ENCODE measurements at regions of chr1 and their contacts with region 1.

Region 1: GRCh38 chr1:61851849-61852669 is 109.8 kb downstream of the PATJ start:
- DNase-seq: peak; percentile 85
- H3K4me3 ChIP-seq: no peak overlapping the region
- H3K27ac ChIP-seq: no peak overlapping the region
- H3K4me1 ChIP-seq: peaks cover 23% of the 10 kb centered on the region
- H3K27me3 ChIP-seq: no peaks in the 10 kb centered on the region
- CTCF ChIP-seq: peak; percentile 90

Region 2: GRCh38 chr1:60848583-60849188 is 1003.4 kb before region 1 on chr1:
- CTCF ChIA-PET with region 1: interaction called, 7 read pairs
- POLR2A ChIA-PET with region 1: no interaction called
- intact Hi-C with region 1: loop called (anchors 2 kb)
- DNase-seq: peak; percentile 68
- H3K4me3 ChIP-seq: no peak overlapping the region
- H3K27ac ChIP-seq: no peak overlapping the region
- H3K4me1 ChIP-seq: no peaks in the 10 kb centered on the region
- H3K27me3 ChIP-seq: no peaks in the 10 kb centered on the region
- CTCF ChIP-seq: peak; percentile 69

Region 3: GRCh38 chr1:61049850-61050540 is 802.1 kb before region 1 on chr1:
- CTCF ChIA-PET with region 1: no interaction called
- POLR2A ChIA-PET with region 1: no interaction called
- intact Hi-C with region 1: loop called (anchors 10 kb)
- DNase-seq: peak; percentile 93
- H3K4me3 ChIP-seq: peak overlapping the region; percentile 82
- H3K27ac ChIP-seq: peak overlapping the region; percentile 86
- H3K4me1 ChIP-seq: peaks cover 8% of the 10 kb centered on the region
- H3K27me3 ChIP-seq: no peaks in the 10 kb centered on the region
- CTCF ChIP-seq: peak; percentile 97

Region 4: DNA sequence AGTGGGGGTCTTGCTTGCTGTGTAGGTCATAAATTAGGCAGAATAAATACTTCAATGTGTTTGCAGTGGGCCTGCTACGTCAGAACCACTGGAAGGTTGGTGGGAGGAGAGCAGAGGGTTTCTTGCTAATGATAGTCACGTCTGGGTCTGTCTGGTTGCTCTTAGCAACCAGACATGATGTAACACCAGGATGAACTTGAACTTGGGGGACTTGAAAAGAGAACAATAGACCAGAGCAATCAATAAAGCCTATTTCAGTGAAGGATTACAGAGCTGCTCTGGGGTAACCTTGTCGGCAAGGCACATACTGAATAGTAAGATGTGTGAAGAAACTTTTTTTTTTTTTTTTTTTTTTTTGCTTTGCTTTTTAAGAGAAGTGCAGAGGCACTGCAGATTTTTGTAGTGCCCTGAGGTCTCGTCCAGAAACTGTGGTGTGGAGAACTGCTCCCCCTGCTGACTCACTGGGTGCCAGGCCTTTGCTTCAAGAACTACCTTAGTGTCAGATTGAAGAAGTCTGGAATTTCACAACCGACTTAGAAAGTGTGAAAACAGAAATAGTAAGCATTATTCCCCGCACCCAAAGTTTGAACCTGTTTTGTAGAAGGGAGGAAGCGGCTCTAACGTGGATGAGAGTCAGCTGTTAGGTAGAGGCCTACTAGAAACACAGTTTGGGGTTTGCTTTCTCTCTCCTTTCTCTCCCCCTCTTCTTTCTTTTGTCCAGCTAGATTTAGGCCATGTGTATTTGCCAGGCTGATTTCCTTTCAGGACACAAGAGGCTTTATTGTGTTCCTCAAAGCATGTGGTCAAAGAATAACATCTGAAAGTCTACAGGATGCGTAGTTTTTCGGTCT is 398.7 kb before region 1 on chr1:
- CTCF ChIA-PET with region 1: no interaction called
- POLR2A ChIA-PET with region 1: no interaction called
- intact Hi-C with region 1: loop called (anchors 10 kb)
- DNase-seq: peak; percentile 92
- H3K4me3 ChIP-seq: no peak overlapping the region
- H3K27ac ChIP-seq: peak overlapping the region; percentile 62
- H3K4me1 ChIP-seq: peaks cover 37% of the 10 kb centered on the region
- H3K27me3 ChIP-seq: no peaks in the 10 kb centered on the region
- CTCF ChIP-seq: peak; percentile 90

Region 5: GRCh38 chr1:61641578-61642336 is 210.3 kb before region 1 on chr1:
- CTCF ChIA-PET with region 1: no interaction called
- POLR2A ChIA-PET with region 1: no interaction called
- intact Hi-C with region 1: loop called (anchors 10 kb)
- DNase-seq: peak; percentile 70
- H3K4me3 ChIP-seq: no peak overlapping the region
- H3K27ac ChIP-seq: no peak overlapping the region
- H3K4me1 ChIP-seq: peaks cover 23% of the 10 kb centered on the region
- H3K27me3 ChIP-seq: no peaks in the 10 kb centered on the region
- CTCF ChIP-seq: peak; percentile 77

Region 6: DNA sequence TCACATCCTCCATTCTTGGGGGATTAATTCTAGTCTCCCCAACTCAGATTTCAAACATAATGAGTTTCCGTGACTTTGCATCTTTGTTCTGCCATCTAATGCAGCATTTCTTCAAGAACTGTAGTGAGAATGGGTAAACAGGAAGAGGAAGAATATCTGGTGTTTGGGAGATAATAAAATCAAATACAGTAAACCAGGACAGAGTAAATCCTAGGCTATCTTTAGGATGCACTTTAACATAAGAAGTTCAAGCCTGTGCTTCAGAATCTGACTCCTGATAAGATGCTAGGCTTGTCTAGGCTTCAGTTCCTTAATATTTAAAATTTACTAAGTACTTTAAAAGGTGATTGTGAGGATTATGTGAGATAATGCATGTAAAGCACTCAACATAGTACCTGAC is 81.9 kb before region 1 on chr1:
- CTCF ChIA-PET with region 1: no interaction called
- POLR2A ChIA-PET with region 1: no interaction called
- intact Hi-C with region 1: no loop called
- DNase-seq: no peak
- H3K4me3 ChIP-seq: no peak overlapping the region
- H3K27ac ChIP-seq: no peak overlapping the region
- H3K4me1 ChIP-seq: no peaks in the 10 kb centered on the region
- H3K27me3 ChIP-seq: no peaks in the 10 kb centered on the region
- CTCF ChIP-seq: no peak

Region 7: GRCh38 chr1:61782771-61783170 is 69.3 kb before region 1 on chr1:
- CTCF ChIA-PET with region 1: no interaction called
- POLR2A ChIA-PET with region 1: no interaction called
- intact Hi-C with region 1: no loop called
- DNase-seq: no peak
- H3K4me3 ChIP-seq: no peak overlapping the region
- H3K27ac ChIP-seq: no peak overlapping the region
- H3K4me1 ChIP-seq: no peaks in the 10 kb centered on the region
- H3K27me3 ChIP-seq: no peaks in the 10 kb centered on the region
- CTCF ChIP-seq: no peak